CD4-positive, alpha-beta memory T cell (primary cell): ENCODE measurements at regions of chr3 and their contacts with region 1.

Region 1: GRCh38 chr3:183766745-183767606 is 58.4 kb downstream of the MAP6D1 start:
- DNase-seq: peak; percentile 65 to 71 (median 68)
- H3K4me3 ChIP-seq: no peak overlapping the region
- H3K4me3 Mint-ChIP-seq: no peak overlapping the region
- H3K27ac ChIP-seq: no peak overlapping the region
- H3K27ac Mint-ChIP-seq: peak overlapping the region in 4 of 7 donors; percentile 10 to 72 (median 53)
- H3K4me1 ChIP-seq: no peaks in the 10 kb centered on the region
- H3K4me1 Mint-ChIP-seq: peaks cover 5 to 16% (median 10%) of the 10 kb centered on the region in 4 donors
- H3K27me3 ChIP-seq: no peaks in the 10 kb centered on the region
- H3K27me3 Mint-ChIP-seq: no peaks in the 10 kb centered on the region

Region 2: DNA sequence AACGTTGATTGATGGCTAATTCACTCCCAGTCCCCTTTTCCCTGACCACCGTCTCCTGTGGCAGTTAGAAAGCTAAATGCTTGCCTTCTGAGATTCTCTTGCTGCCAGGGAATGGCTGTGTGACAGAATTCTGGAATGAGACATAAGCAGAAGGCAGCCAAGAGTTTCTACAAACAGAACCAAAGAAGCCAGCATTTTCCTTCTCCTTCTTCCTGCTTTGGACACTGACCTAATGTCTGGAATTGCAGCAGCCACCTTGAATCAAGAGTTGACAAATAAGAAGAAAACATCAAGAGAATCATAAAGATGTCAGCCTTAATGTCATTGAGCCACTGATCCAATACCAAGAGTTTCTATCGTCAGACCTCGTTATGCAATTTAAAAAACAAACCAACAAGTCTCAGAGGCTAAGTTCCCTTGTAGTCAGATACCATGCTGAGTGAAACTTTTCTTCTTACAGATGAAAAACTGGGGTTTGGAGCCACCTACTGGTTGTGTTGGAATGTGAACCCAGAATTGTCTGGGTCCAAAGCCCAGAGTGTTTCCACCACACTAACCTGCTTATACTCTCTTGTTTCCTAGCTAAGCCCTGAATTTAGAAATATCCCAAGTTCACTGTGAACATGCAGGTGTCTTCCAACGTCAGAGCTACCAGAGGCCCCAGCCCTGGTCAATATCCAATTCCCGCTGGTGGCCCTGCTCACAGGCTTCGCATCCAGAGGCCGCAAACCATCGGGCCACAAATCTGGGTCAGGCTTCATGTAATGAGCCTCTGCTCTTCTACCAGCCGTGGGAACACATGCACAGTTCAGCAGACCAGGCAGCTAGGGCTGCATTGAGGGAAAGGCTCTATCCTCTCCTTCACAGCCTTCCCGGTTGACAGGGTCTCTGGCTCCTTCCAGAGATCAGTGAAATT is 381.0 kb before region 1 on chr3:
- CTCF ChIA-PET with region 1: interaction called, 6 read pairs
- POLR2A ChIA-PET with region 1: no interaction called
- intact Hi-C with region 1: loop called (anchors 2 kb)
- DNase-seq: peak; percentile 54 to 63 (median 55)
- H3K4me3 ChIP-seq: no peak overlapping the region
- H3K4me3 Mint-ChIP-seq: no peak overlapping the region
- H3K27ac ChIP-seq: no peak overlapping the region
- H3K27ac Mint-ChIP-seq: peak overlapping the region in 3 of 7 donors; percentile 6 to 83 (median 11)
- H3K4me1 ChIP-seq: no peaks in the 10 kb centered on the region
- H3K4me1 Mint-ChIP-seq: peaks cover 2 to 6% (median 4%) of the 10 kb centered on the region in 4 donors
- H3K27me3 ChIP-seq: no peaks in the 10 kb centered on the region
- H3K27me3 Mint-ChIP-seq: no peaks in the 10 kb centered on the region

Region 3: DNA sequence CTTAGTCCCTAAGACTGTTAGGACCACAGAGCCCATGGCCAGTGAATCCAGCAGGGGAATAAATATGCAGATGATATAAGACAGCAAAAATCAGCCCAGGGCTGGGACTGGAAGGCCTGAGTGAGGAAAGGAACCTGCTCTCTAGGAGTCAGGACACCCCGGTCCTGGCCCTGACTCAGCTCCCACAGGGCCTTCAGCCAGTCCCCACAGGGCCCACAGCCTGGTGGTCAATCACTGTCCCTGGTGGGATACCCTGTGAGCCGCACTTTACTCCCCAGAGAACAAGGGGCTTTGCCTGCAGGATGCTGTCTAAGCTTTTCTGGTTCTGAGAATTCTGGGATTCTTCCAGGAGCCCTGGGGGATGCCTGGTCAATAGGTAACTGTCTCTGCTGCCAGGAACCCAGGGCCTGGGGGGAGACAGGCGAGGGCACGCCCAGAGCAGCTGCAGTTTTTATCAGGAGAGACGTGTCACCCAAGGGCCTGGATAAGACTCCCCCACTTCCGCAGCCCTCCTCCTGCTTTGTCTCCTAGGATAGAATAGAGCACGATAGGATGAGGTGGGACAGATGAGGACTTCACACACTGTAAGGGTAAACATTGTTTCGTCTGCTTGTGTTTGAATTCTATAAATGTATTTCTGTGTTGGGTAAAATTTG is 289.0 kb before region 1 on chr3:
- CTCF ChIA-PET with region 1: interaction called, 153 read pairs
- POLR2A ChIA-PET with region 1: no interaction called
- intact Hi-C with region 1: no loop called
- DNase-seq: no peak
- H3K4me3 ChIP-seq: no peak overlapping the region
- H3K4me3 Mint-ChIP-seq: no peak overlapping the region
- H3K27ac ChIP-seq: no peak overlapping the region
- H3K27ac Mint-ChIP-seq: no peak overlapping the region
- H3K4me1 ChIP-seq: no peaks in the 10 kb centered on the region
- H3K4me1 Mint-ChIP-seq: peaks cover 0 to 2% (median 0%) of the 10 kb centered on the region in 4 donors
- H3K27me3 ChIP-seq: no peaks in the 10 kb centered on the region
- H3K27me3 Mint-ChIP-seq: peaks cover 6 to 8% of the 10 kb centered on the region in 2 donors

Region 4: GRCh38 chr3:183779896-183780465 is 13.0 kb after region 1 on chr3:
- CTCF ChIA-PET with region 1: interaction called, 11 read pairs
- POLR2A ChIA-PET with region 1: no interaction called
- intact Hi-C with region 1: no loop called
- DNase-seq: no peak
- H3K4me3 ChIP-seq: no peak overlapping the region
- H3K4me3 Mint-ChIP-seq: no peak overlapping the region
- H3K27ac ChIP-seq: no peak overlapping the region
- H3K27ac Mint-ChIP-seq: no peak overlapping the region
- H3K4me1 ChIP-seq: no peaks in the 10 kb centered on the region
- H3K4me1 Mint-ChIP-seq: peaks cover 0 to 4% (median 0%) of the 10 kb centered on the region in 4 donors
- H3K27me3 ChIP-seq: no peaks in the 10 kb centered on the region
- H3K27me3 Mint-ChIP-seq: no peaks in the 10 kb centered on the region

Region 5: DNA sequence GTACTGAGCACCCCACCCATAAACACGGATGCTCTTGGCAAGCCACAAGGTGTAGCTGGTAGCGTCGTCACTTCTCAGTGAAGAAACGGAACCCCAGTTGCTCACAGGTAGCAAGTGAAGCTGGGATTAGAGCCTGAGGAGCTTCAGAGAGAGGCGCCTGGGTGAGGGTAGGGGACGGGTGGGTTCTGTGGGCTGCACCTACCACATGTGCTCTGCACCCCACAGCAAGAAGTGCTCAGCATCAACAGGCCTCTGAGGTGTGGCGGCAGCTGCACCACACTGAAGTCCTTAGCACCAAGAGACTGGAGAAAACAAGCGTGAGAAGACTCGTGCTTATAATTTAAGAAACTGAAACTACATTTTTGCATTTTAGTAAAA is 48.6 kb after region 1 on chr3:
- CTCF ChIA-PET with region 1: interaction called, 10 read pairs
- POLR2A ChIA-PET with region 1: no interaction called
- intact Hi-C with region 1: no loop called
- DNase-seq: peak in 2 of 5 donors; percentile 9 to 16
- H3K4me3 ChIP-seq: no peak overlapping the region
- H3K4me3 Mint-ChIP-seq: peak overlapping the region in 7 of 8 donors; percentile 33 to 82 (median 71)
- H3K27ac ChIP-seq: peak overlapping the region; percentile 20
- H3K27ac Mint-ChIP-seq: peak overlapping the region; percentile 42 to 94 (median 91)
- H3K4me1 ChIP-seq: peaks cover 18% of the 10 kb centered on the region
- H3K4me1 Mint-ChIP-seq: peaks cover 14 to 24% (median 18%) of the 10 kb centered on the region in 4 donors
- H3K27me3 ChIP-seq: no peaks in the 10 kb centered on the region
- H3K27me3 Mint-ChIP-seq: no peaks in the 10 kb centered on the region

Region 6: DNA sequence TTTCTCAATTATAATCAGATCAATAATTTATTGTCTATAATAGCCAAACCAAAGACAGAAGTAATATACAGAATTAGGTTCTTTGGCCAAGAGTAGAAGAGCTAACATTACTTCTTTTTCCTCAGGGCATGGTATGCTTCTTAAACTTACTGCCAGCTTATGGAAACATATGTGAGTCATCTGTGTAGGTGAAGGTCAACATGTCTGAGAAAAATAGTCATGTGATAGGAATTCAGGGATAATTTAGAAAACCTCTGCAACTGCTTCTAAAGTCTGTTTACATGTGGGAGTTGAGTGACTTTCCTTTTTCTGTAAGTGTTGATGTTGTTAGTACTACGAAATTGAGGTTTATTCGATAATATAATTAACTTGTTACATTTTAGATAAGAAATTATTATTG is 77.6 kb after region 1 on chr3:
- CTCF ChIA-PET with region 1: no interaction called
- POLR2A ChIA-PET with region 1: no interaction called
- intact Hi-C with region 1: no loop called
- DNase-seq: no peak
- H3K4me3 ChIP-seq: no peak overlapping the region
- H3K4me3 Mint-ChIP-seq: no peak overlapping the region
- H3K27ac ChIP-seq: no peak overlapping the region
- H3K27ac Mint-ChIP-seq: peak overlapping the region in 1 of 7 donors; percentile 57
- H3K4me1 ChIP-seq: no peaks in the 10 kb centered on the region
- H3K4me1 Mint-ChIP-seq: no peaks in the 10 kb centered on the region
- H3K27me3 ChIP-seq: no peaks in the 10 kb centered on the region
- H3K27me3 Mint-ChIP-seq: no peaks in the 10 kb centered on the region